ENCODE measurements at regions of chr12 and their contacts with region 1.

Region 1: GRCh38 chr12:27511031-27511722 is 12.8 kb upstream of the PPFIBP1 start:
- DNase-seq: no peak
- ATAC-seq: peak in 1 of 4 donors; percentile 54
- H3K4me3 ChIP-seq: no peak overlapping the region
- H3K27ac ChIP-seq: no peak overlapping the region
- H3K4me1 ChIP-seq: peaks cover 12% of the 10 kb centered on the region
- H3K27me3 ChIP-seq: no peaks in the 10 kb centered on the region
- CTCF ChIP-seq: no peak

Region 2: GRCh38 chr12:27449026-27449425 is 62.2 kb before region 1 on chr12:
- intact Hi-C with region 1: loop called in 1 of 2 experiments (anchors 10 kb)
- DNase-seq: no peak
- ATAC-seq: no peak
- H3K4me3 ChIP-seq: no peak overlapping the region
- H3K27ac ChIP-seq: no peak overlapping the region
- H3K4me1 ChIP-seq: no peaks in the 10 kb centered on the region
- H3K27me3 ChIP-seq: no peaks in the 10 kb centered on the region
- CTCF ChIP-seq: no peak

Measured in psoas muscle (tissue), 8 donors.